PC-9 (cell line): ENCODE measurements at regions of chr4 and their contacts with region 1.

Region 1: GRCh38 chr4:74320559-74321118 is 12.4 kb downstream of the EPGN start:
- DNase-seq: peak; percentile 80 to 91
- H3K4me3 ChIP-seq: no peak overlapping the region
- H3K27ac ChIP-seq: peak overlapping the region; percentile 30; the same call in 1 of the 2 replicates
- H3K4me1 ChIP-seq: peaks cover 12% of the 10 kb centered on the region
- H3K27me3 ChIP-seq: no peaks in the 10 kb centered on the region
- CTCF ChIP-seq: peak; percentile 74

Region 2: DNA sequence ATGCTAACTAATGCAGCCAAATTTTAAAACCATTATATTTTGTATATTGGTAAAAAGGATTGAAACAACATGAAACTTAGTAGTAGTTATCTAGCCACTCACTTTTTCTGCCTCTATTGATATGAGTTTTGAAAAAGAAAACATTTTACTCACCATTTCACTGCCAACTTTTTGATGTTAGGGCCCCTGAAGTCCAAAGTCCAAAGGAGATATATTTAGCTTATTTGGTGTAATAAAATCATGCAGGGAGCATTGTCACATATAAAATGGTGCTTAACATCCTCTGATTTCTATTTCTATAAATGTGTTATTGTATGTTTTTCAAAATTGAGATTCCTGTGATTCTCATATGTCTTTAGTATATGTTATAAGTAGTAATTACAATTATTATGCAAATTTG is 257.7 kb before region 1 on chr4:
- CTCF ChIA-PET with region 1: no interaction called
- POLR2A ChIA-PET with region 1: no interaction called
- intact Hi-C with region 1: no loop called
- DNase-seq: no peak
- H3K4me3 ChIP-seq: no peak overlapping the region
- H3K27ac ChIP-seq: no peak overlapping the region
- H3K4me1 ChIP-seq: peaks cover under 1% of the 10 kb centered on the region; the same call in 1 of the 2 replicates
- H3K27me3 ChIP-seq: no peaks in the 10 kb centered on the region
- CTCF ChIP-seq: no peak

Region 3: GRCh38 chr4:74376888-74377483 is 56.3 kb after region 1 on chr4:
- CTCF ChIA-PET with region 1: interaction called, 3 read pairs
- POLR2A ChIA-PET with region 1: no interaction called
- intact Hi-C with region 1: loop called (anchors 1 kb)
- DNase-seq: no peak
- H3K4me3 ChIP-seq: peak overlapping the region; percentile 55; the same call in 1 of the 2 replicates
- H3K27ac ChIP-seq: peak overlapping the region; percentile 100
- H3K4me1 ChIP-seq: peaks cover 33% of the 10 kb centered on the region
- H3K27me3 ChIP-seq: no peaks in the 10 kb centered on the region
- CTCF ChIP-seq: peak; percentile 70

Region 4: GRCh38 chr4:74444891-74445642 is 124.4 kb after region 1 on chr4 and contains the start of gene AREG:
- CTCF ChIA-PET with region 1: no interaction called
- POLR2A ChIA-PET with region 1: no interaction called
- intact Hi-C with region 1: loop called (anchors 5 kb)
- DNase-seq: peak; percentile 43 to 70
- H3K4me3 ChIP-seq: peak within 1 kb of the TSS; percentile 85
- H3K27ac ChIP-seq: peak within 1 kb of the TSS; percentile 63
- H3K4me1 ChIP-seq: peaks cover 13% of the 10 kb centered on the region
- H3K27me3 ChIP-seq: no peaks in the 10 kb centered on the region
- CTCF ChIP-seq: peak; percentile 69; the same call in 1 of the 2 replicates
- total RNA-seq, gene AREG: 4.5 and 6.4 TPM in 2 replicates

Region 5: GRCh38 chr4:74531963-74532794 is 211.5 kb after region 1 on chr4:
- CTCF ChIA-PET with region 1: no interaction called
- POLR2A ChIA-PET with region 1: no interaction called
- intact Hi-C with region 1: loop called (anchors 1 kb)
- DNase-seq: peak in 1 of 2 experiments; percentile 25
- H3K4me3 ChIP-seq: no peak overlapping the region
- H3K27ac ChIP-seq: 0 out of 2 replicates have a peak overlapping the region, but pooled peaks have one; percentile 38
- H3K4me1 ChIP-seq: no peaks in the 10 kb centered on the region
- H3K27me3 ChIP-seq: no peaks in the 10 kb centered on the region
- CTCF ChIP-seq: peak; percentile 50; the same call in 1 of the 2 replicates

Region 6: DNA sequence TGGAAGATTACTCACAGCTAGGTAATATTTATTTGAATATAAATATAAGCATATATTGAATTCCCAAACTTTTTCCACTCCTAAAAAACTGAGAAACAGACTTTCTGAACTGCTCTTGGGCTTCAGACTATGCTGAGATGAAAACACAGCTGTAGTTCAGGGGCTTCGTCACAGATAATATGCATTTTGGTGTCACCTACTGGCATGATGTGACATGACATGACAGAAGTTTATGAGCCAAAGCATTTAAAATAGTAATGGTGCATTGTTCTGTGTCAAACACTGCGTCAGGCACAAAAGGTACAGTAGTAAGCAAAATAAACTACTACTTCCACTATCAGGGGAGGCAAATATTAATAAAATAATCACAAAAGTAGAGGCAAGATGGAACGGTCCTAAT is 302.4 kb after region 1 on chr4:
- CTCF ChIA-PET with region 1: no interaction called
- POLR2A ChIA-PET with region 1: no interaction called
- intact Hi-C with region 1: loop called (anchors 1 kb)
- DNase-seq: no peak
- H3K4me3 ChIP-seq: no peak overlapping the region
- H3K27ac ChIP-seq: peak overlapping the region; percentile 83
- H3K4me1 ChIP-seq: peaks cover 28% of the 10 kb centered on the region
- H3K27me3 ChIP-seq: no peaks in the 10 kb centered on the region
- CTCF ChIP-seq: peak; percentile 55

Region 7: DNA sequence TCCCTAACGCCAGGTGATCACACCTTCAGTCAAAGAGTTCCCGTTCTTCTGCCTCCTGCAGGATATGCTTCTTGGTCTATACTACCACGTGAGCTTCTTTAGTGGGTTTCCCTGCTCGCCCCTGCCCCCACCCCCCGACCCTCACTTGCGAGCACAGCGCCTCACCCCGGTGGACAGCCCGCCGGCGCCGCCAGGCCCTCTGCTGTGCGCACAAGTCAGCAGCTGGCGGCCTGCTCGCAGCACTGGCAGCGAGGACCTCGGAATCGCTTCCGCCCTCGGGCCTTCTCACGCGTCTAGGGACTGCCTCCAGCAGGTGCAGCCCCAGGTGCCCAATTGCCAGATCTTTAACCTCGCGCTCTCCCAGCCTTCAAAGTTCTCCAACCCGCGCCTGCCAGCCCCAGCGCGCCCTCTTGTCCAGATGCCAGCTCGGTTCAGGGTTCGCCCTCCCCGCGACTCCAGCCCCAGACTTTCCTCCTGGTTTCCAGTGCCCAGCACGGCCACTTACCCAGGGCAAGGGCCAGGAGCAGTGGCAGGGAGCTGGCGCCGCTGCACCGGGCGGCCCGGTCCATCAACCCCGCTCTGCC is 473.2 kb after region 1 on chr4:
- CTCF ChIA-PET with region 1: no interaction called
- POLR2A ChIA-PET with region 1: no interaction called
- intact Hi-C with region 1: loop called (anchors 1 kb)
- DNase-seq: peak; percentile 56 to 66
- H3K4me3 ChIP-seq: peak overlapping the region; percentile 91
- H3K27ac ChIP-seq: peak overlapping the region; percentile 79
- H3K4me1 ChIP-seq: peaks cover 11% of the 10 kb centered on the region
- H3K27me3 ChIP-seq: no peaks in the 10 kb centered on the region
- CTCF ChIP-seq: no peak; the same call in 1 of the 2 replicates

Region 8: DNA sequence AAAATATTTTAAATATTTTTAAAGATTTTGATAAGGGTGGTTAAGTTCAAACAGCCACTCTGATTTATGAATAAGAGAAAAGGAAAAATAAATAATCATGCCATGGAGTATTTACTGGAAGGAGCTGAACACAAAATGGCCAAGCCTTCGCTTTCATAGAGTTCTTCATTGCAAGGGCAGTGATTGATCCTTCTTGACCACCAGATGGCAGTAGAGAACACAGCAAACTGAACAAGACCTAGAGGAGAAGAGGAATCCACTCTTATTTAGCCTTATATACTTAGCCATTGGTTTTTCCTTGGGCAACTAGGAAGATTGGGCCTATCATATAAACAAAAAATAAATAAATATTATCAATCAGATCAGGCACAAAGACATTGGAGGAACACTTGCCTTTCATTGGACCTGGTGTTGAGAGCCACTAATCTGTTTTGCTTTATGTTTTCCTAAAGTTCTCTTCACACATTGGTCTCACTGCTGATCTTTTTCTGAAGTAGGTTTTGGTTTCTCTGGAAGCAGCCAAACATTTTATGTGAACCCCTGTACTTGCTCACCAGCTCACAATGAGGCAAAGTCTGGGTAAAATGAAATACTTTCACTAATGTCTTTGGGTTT is 554.2 kb after region 1 on chr4:
- CTCF ChIA-PET with region 1: no interaction called
- POLR2A ChIA-PET with region 1: no interaction called
- intact Hi-C with region 1: loop called (anchors 5 kb)
- DNase-seq: peak; percentile 4 to 57
- H3K4me3 ChIP-seq: no peak overlapping the region
- H3K27ac ChIP-seq: no peak overlapping the region
- H3K4me1 ChIP-seq: no peaks in the 10 kb centered on the region
- H3K27me3 ChIP-seq: no peaks in the 10 kb centered on the region
- CTCF ChIP-seq: peak; percentile 88